Dorsolateral prefrontal cortex (tissue), 120 donors: ENCODE measurements at regions of chr6 and their contacts with region 1.

Region 1: GRCh38 chr6:80209430-80209829 is 103.0 kb downstream of the BCKDHB start:
- DNase-seq: no peak
- H3K4me3 ChIP-seq: no peak overlapping the region
- H3K27ac ChIP-seq: no peak overlapping the region
- H3K27me3 ChIP-seq: no peaks in the 10 kb centered on the region
- CTCF ChIP-seq: no peak

Region 2: GRCh38 chr6:79544939-79545450 is 664.4 kb before region 1 on chr6:
- intact Hi-C with region 1: no loop called
- DNase-seq: peak in 9 of 10 donors; percentile 61 to 80 (median 69)
- H3K4me3 ChIP-seq: peak overlapping the region; percentile 2 to 68 (median 47)
- H3K27ac ChIP-seq: peak overlapping the region; percentile 46 to 96 (median 87)
- H3K27me3 ChIP-seq: no peaks in the 10 kb centered on the region
- CTCF ChIP-seq: peak in 53 of 56 donors; percentile 27 to 75 (median 52)

Region 3: DNA sequence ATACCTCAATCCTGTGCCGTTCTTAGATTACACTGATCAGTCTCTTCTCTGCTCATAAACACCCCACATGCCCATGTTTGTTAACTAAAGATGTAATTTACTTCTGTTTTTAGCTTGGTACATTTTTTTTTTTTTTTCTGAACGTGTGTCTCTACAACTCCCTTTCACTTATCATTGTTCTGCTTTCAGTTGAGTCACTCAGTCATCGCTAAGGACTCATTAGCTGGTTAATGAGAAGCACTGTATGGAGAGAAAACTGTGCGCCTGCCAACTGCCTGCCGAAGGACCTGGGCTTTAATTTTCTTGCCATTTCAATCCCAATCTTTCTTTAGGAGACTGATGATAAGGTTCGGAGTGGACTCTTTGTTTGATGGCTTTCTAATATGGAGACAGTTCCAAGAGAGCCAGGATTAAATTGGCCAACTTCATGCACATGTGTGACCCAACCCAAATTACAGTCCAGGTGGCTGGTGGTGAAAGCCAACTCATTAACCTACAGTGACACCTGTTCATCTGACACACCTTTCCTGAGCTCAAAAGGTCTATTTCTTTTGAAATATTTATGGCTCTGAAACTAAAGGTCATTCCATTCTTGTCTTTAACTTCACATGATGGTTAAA is 231.2 kb after region 1 on chr6:
- intact Hi-C with region 1: no loop called
- DNase-seq: no peak
- H3K4me3 ChIP-seq: no peak overlapping the region
- H3K27ac ChIP-seq: no peak overlapping the region
- H3K27me3 ChIP-seq: no peaks in the 10 kb centered on the region
- CTCF ChIP-seq: no peak

Region 4: DNA sequence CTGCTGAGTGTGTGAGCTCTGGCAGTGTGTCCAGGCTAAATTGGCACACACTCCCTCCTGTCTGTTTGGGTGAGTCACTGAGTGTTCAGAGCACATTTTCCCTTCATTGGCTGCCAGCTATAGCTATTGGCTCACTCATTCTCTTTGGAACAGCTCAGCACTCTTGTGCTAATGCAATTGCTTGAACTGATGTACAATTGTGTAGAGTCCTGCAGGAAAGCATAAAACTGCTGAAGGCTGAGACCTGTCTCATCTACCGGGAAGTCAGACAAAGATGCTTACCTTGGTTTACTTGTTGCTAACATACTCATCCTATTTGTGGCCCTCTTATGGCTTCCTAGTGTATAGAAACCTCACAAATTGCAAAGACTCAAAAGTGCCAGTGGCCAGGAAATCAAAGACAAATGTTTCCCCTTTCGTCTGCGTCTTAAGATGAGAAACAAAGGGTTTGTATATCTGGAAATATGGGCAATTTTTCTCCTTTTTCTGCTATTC is 248.1 kb after region 1 on chr6:
- intact Hi-C with region 1: loop called in 1 of 2 experiments (anchors 10 kb)
- DNase-seq: peak in 9 of 10 donors; percentile 43 to 79 (median 61)
- H3K4me3 ChIP-seq: no peak overlapping the region
- H3K27ac ChIP-seq: no peak overlapping the region
- H3K27me3 ChIP-seq: no peaks in the 10 kb centered on the region
- CTCF ChIP-seq: no peak